ENCODE measurements at regions of chr22 and their contacts with region 1.

Region 1: GRCh38 chr22:25627271-25627852 is 62.9 kb downstream of the GRK3 start:
- DNase-seq: no peak

Region 2: GRCh38 chr22:25666308-25666707 is 38.9 kb after region 1 on chr22:
- intact Hi-C with region 1: loop called (anchors 5 kb)
- DNase-seq: peak; percentile 83

Region 3: GRCh38 chr22:25680956-25681355 is 53.6 kb after region 1 on chr22:
- intact Hi-C with region 1: no loop called
- DNase-seq: no peak